Motor neuron (in vitro differentiated cells): ENCODE measurements at regions of chr20 and their contacts with region 1.

Region 1: GRCh38 chr20:25076731-25077609 is 5.0 kb downstream of the VSX1 start:
- ATAC-seq: peak; percentile 9 to 39 (median 15)
- H3K4me3 ChIP-seq: peak overlapping the region in 3 of 5 donors; percentile 9 to 31 (median 23)
- H3K27ac ChIP-seq: no peak overlapping the region
- H3K4me1 ChIP-seq: peaks cover 0 to 10% of the 10 kb centered on the region in 2 donors

Region 2: DNA sequence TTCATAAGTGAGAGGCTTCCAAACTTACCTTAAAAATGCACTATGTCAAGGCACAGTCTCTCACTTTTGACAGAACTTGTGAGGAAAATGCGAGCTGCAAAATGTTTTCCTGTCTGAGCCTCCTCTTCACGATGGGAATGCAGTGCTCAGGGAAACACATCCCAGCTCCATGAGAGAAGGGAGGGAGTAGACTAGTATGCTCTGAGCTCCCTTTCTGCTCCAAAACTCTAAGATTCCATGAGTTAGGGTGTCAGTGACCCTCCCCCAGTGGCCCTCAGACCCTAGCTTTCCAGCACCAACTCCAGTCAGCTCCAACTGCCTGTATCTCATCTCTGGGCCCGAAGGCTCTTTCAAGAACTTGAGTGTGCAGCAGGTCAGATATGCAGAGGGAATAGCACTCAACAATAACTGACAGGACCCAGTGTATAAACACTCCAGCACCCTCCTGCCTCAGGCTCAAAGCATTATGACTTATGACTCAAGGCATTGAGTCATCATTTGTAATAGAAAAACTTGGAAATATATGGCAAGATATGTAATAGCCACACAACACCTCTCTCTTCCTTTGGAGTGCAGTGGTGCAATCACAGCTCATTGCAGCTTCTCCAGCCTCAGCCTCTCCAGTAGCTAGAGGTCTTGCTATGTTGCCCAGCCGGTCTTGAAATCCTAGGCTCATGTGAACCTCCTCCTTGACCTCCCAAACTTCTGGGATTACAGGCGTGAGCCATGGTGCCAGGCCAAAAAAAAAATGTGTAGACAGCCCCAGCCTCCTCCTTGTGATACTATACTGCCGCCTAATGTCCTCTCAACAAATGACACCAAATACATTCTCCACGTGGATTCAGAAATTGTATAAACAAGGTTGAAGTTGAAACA is 101.8 kb after region 1 on chr20:
- in situ Hi-C with region 1: loop called in 1 of 9 experiments (anchors 10 kb)
- ATAC-seq: peak; percentile 77 to 98 (median 86)
- H3K4me3 ChIP-seq: no peak overlapping the region
- H3K27ac ChIP-seq: no peak overlapping the region
- H3K4me1 ChIP-seq: no peaks in the 10 kb centered on the region

Region 3: DNA sequence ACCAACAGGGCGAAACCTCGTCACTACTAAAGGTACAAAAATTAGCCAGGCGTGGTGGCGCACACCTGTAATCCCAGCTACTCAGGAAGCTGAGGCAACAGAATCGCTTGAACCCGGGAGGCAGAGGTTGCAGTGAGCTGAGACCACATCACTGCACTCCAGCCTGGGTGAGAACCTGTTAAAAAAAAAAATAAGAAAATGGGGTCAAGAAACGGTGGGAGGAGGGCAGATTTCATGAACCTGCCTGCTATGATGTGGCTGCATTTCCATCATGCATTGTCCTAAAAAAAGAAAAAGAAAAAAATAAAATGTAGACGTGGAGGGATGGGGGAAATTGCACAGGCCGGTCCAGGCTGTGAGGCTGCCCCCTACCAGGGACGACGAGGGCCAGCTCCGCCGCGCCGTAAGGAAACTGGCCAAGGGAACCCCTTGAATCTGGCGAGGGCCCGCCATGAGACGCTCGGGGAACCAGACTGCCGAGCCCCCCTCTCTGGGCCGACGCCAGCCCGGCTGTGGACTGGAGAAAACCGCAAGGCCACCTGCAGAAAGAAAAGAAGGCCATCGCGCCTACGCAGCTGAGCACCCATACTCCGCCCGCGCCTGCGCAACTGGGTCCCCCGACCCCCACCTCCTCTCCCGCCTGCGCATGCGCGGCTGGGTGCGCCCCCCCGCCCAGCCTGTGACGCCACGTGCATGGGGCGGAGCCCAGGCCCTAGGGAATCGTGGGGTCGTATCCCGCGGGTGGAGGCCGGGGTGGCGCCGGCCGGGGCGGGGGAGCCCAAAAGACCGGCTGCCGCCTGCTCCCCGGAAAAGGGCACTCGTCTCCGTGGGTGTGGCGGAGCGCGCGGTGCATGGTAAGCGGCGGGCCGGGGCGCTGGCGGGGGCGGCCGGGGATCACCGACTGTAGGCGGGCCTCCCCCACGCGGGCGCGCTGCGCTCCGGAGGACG is 118.3 kb after region 1 on chr20 and contains the start of gene ENTPD6:
- in situ Hi-C with region 1: no loop called
- ATAC-seq: peak; percentile 60 to 86 (median 84)
- H3K4me3 ChIP-seq: peak within 1 kb of the TSS; percentile 53 to 99 (median 93)
- H3K27ac ChIP-seq: peak within 1 kb of the TSS; percentile 86 to 92
- H3K4me1 ChIP-seq: peaks cover 6 to 16% of the 10 kb centered on the region in 2 donors
- total RNA-seq, gene ENTPD6: 37.7 to 58.2 (median 53.1) TPM